MCF 10A (cell line): ENCODE measurements at regions of chr3 and their contacts with region 1.

Region 1: GRCh38 chr3:184469423-184469822 is 89.6 kb downstream of the CHRD start:
- DNase-seq: peak; percentile 68
- H3K4me3 Mint-ChIP-seq: no peak overlapping the region
- H3K27ac Mint-ChIP-seq: no peak overlapping the region
- H3K4me1 Mint-ChIP-seq: no peaks in the 10 kb centered on the region
- H3K27me3 Mint-ChIP-seq: peaks cover 44% of the 10 kb centered on the region
- CTCF ChIP-seq: peak; percentile 78

Region 2: DNA sequence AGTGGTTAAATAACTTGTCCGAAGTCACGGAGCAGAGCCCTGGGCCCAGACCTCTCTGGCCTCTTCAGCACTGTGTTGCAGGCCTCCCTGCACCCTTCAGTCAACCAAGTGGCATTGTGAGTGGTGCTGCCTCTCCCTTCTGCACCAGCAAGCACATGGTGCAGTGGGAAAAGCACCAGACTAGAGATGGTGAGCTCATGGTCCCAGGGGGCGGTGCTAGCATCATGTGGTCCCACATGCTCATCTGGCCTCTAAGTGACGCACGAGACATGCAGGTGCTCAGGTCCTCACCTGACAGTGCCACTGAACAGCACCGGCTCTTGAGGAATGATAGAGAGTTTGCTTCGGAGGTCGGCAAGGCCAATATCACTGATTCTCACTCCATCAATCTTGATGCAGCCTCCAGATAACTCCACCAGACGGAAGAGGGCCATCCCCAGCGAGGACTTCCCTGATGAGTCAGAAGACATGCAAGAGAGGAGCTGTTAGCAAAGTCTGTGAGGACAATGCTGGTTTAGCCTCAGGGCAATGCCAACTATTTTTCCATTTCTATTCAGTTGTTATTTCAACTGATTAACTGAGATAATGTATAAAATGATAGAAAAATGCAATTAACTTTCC is 531.7 kb before region 1 on chr3:
- CTCF ChIA-PET with region 1: no interaction called
- POLR2A ChIA-PET with region 1: no interaction called
- intact Hi-C with region 1: no loop called
- DNase-seq: peak; percentile 27
- H3K4me3 Mint-ChIP-seq: no peak overlapping the region
- H3K27ac Mint-ChIP-seq: no peak overlapping the region
- H3K4me1 Mint-ChIP-seq: no peaks in the 10 kb centered on the region
- H3K27me3 Mint-ChIP-seq: no peaks in the 10 kb centered on the region
- CTCF ChIP-seq: no peak

Region 3: GRCh38 chr3:184417619-184418327 is 51.6 kb before region 1 on chr3:
- CTCF ChIA-PET with region 1: interaction called, 112 read pairs
- POLR2A ChIA-PET with region 1: no interaction called
- intact Hi-C with region 1: loop called (anchors 1 kb)
- DNase-seq: peak; percentile 72
- H3K4me3 Mint-ChIP-seq: no peak overlapping the region
- H3K27ac Mint-ChIP-seq: no peak overlapping the region
- H3K4me1 Mint-ChIP-seq: no peaks in the 10 kb centered on the region
- H3K27me3 Mint-ChIP-seq: peaks cover 2% of the 10 kb centered on the region
- CTCF ChIP-seq: peak; percentile 91

Region 4: GRCh38 chr3:184428561-184429175 is 40.8 kb before region 1 on chr3:
- CTCF ChIA-PET with region 1: interaction called, 28 read pairs
- POLR2A ChIA-PET with region 1: interaction called, 3 read pairs
- intact Hi-C with region 1: no loop called
- DNase-seq: no peak
- H3K4me3 Mint-ChIP-seq: no peak overlapping the region
- H3K27ac Mint-ChIP-seq: no peak overlapping the region
- H3K4me1 Mint-ChIP-seq: peaks cover 10% of the 10 kb centered on the region
- H3K27me3 Mint-ChIP-seq: peaks cover 5% of the 10 kb centered on the region
- CTCF ChIP-seq: no peak

Region 5: DNA sequence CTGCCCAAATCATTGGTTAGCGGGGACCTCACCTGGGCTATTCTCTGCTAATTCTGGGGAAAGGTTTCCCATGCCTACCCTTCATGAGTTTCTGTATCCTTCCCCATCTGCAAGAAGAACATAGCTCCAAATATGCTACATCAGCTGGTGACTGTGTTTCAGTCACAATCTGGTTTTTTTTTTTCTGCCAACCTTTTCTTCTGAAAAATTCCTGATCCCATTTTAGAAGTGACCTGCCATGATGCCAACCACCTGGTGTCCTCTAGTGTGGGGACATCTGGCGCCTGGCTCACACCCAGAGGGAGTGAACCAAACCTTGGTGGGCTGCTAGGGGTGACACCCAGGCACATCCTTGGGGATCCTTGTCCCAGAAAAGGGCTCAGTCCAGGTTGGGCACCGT is 13.4 kb before region 1 on chr3:
- CTCF ChIA-PET with region 1: interaction called, 14 read pairs
- POLR2A ChIA-PET with region 1: no interaction called
- intact Hi-C with region 1: no loop called
- DNase-seq: no peak
- H3K4me3 Mint-ChIP-seq: no peak overlapping the region
- H3K27ac Mint-ChIP-seq: no peak overlapping the region
- H3K4me1 Mint-ChIP-seq: no peaks in the 10 kb centered on the region
- H3K27me3 Mint-ChIP-seq: no peaks in the 10 kb centered on the region
- CTCF ChIP-seq: no peak

Region 6: DNA sequence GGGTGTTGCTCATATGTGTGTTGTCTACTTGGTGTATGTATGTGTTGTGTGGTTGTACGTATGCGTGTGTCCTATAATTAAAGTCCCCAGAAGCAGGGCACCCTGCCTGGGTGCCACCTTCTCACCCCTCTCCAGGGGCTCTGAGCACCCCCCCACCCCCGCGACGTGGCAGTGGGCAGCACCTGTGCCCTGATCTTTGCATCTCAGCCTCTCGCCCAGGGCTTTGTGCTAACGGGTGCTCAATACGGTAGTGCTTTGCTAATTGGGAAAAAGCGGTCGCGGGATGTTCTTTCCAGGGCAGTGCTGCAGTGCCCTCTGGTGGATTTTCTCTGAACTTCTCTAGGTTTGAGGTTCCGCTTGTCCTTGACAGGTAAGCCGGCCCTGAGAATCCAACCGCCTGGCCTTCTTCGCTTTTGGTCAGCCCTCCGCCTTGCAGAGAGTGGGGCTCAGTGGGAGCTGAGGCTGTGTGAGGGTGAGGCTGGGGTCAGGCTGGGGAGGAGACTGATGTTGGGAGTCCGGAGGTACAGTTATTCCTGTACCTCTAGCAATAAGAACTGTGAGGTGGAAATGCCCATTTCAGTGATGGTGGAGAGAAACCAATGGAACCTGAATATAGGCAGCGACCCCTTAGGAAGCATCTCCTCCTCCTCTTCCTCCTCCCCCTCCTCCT is 74.6 kb after region 1 on chr3:
- CTCF ChIA-PET with region 1: interaction called, 162 read pairs
- POLR2A ChIA-PET with region 1: no interaction called
- intact Hi-C with region 1: loop called (anchors 1 kb)
- DNase-seq: peak; percentile 82
- H3K4me3 Mint-ChIP-seq: no peak overlapping the region
- H3K27ac Mint-ChIP-seq: no peak overlapping the region
- H3K4me1 Mint-ChIP-seq: no peaks in the 10 kb centered on the region
- H3K27me3 Mint-ChIP-seq: peaks cover 70% of the 10 kb centered on the region
- CTCF ChIP-seq: peak; percentile 91